AG04449 (cell line): ENCODE measurements at regions of chr14 and their contacts with region 1.

Region 1: GRCh38 chr14:68862954-68863594 is 70.2 kb upstream of the ZFP36L1 start:
- DNase-seq: peak; percentile 16
- H3K4me3 ChIP-seq: no peak overlapping the region
- CTCF ChIP-seq: peak; percentile 81

Region 2: GRCh38 chr14:68849413-68849812 is 13.7 kb before region 1 on chr14:
- CTCF ChIA-PET with region 1: interaction called, 14 read pairs
- POLR2A ChIA-PET with region 1: no interaction called
- DNase-seq: no peak
- H3K4me3 ChIP-seq: no peak overlapping the region
- CTCF ChIP-seq: no peak

Region 3: DNA sequence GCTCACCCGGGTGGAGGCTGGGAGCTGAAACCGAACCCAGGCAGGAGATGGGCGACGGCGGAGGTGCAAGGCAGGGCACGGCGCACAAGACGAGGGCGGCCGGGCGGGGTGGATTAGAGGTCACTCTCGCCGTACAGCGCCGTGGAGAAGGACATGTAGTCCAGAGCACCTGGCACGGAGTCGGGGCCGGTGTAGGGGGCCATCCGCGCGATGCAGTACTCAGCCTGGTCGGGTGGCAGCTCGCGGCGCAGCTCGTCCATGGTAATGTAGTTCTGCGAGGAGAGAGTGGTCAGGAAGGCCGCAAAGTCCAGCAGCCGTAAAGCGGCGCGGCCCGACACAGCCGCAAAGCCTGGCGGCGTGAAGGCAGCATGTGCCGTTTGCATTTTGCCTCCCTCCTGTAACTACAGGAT is 11.7 kb after region 1 on chr14:
- CTCF ChIA-PET with region 1: interaction called, 41 read pairs
- POLR2A ChIA-PET with region 1: no interaction called
- DNase-seq: no peak
- H3K4me3 ChIP-seq: no peak overlapping the region
- CTCF ChIP-seq: no peak

Region 4: DNA sequence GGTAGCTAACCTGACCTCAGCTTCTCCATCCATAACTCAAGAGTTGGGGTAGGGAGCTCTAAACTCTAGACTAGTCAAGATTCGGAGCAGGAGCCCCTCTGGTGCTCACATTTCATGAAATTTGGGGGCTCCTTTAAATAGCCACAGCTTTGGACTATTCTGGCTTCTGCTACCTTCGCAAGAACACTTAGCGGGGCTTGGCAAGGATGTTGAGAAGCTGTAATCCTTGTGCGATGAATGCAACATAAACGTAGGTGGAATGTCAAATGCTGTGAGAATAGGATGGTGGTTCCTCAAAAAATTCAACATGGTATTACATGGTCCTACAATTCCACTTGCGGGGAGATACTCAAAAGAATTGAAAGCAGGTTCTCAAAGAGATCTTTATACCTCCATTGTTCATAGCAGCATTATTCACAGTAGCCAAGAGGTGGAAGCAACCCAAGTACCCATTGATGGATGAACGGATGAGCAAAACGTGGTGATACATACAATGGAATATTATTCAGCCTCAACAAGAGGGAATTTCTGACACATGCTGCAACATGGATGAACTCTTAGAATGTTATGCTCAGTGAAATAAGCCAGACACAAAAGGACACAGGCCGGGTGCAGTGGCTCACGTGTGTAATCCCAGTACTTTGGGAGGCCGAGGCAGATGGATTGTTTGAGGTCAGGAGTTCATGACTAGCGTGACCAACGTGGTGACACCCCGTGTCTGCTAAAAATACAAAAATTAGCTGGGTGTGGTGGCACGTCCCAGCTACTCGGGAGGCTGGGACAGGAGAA is 42.2 kb after region 1 on chr14:
- CTCF ChIA-PET with region 1: no interaction called
- POLR2A ChIA-PET with region 1: no interaction called
- DNase-seq: no peak
- H3K4me3 ChIP-seq: no peak overlapping the region
- CTCF ChIP-seq: no peak

Region 5: DNA sequence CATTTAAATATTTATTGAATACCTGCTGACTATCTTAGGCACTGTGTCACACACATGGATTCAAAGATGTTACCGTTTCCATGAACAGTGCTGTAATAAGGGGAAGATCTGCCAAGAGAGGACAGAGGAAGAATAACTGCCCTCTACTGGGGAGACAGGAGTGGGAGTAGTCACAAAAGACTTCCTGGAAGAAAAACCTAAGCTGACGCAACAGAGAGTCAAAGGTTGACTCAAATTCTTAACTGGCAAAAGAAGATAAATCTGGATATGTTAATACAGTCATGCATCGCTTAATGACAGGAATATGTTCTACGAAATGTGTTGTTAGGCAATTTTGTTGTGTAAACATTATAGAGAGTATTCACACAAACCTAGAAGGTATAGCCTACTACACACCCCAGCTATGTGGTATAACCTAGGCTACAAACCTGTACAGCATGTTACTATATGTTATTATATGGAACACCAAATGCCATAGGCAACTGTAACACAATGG is 238.3 kb after region 1 on chr14:
- CTCF ChIA-PET with region 1: interaction called, 141 read pairs
- POLR2A ChIA-PET with region 1: no interaction called
- DNase-seq: peak; percentile 42
- H3K4me3 ChIP-seq: no peak overlapping the region
- CTCF ChIP-seq: peak; percentile 60